ENCODE measurements at regions of chr9 and their contacts with region 1.

Region 1: DNA sequence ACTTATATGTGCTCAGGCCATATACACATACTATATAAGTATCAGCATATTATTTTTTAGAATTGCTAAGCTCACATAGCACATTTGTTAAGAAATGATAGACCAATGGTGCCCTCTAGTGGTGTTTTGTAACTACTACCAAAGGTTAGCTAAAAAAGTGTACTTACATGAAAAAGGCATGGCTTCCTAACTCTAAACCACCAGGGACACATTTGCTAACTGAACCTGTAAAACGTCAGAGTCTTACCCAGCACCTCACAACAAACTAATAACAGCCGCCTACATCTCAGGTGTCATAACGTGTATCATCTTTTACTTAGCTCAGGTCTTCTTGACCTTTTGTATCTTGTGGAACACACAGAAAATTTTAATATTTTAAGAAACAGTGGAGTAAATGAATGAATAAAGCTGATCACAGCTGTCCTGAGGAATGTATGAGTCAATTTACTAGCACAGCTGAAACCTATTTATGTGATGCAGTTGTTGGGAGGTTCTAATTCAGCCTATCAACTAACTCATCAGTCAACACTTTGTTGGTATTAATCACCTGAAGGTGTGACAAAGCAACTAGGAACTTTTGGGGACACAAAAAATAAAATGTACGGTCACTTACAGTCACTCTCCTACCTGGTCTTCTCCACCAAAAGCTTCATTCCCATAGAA is 72.9 kb downstream of the BAAT start:
- H3K4me3 ChIP-seq: no peak overlapping the region
- H3K27ac ChIP-seq: no peak overlapping the region
- H3K4me1 ChIP-seq: no peaks in the 10 kb centered on the region
- CTCF ChIP-seq: 0 out of 2 replicates have a peak, but pooled peaks have one; percentile 22

Region 2: GRCh38 chr9:100700689-100701318 is 611.1 kb before region 1 on chr9:
- CTCF ChIA-PET with region 1: interaction called, 38 read pairs
- POLR2A ChIA-PET with region 1: no interaction called
- H3K4me3 ChIP-seq: no peak overlapping the region
- H3K27ac ChIP-seq: no peak overlapping the region
- H3K4me1 ChIP-seq: no peaks in the 10 kb centered on the region
- CTCF ChIP-seq: no peak

Region 3: GRCh38 chr9:100959226-100959625 is 352.7 kb before region 1 on chr9:
- CTCF ChIA-PET with region 1: no interaction called
- POLR2A ChIA-PET with region 1: no interaction called
- H3K4me3 ChIP-seq: no peak overlapping the region
- H3K27ac ChIP-seq: no peak overlapping the region
- H3K4me1 ChIP-seq: no peaks in the 10 kb centered on the region
- CTCF ChIP-seq: no peak

Region 4: GRCh38 chr9:101026824-101027223 is 285.1 kb before region 1 on chr9:
- CTCF ChIA-PET with region 1: no interaction called
- POLR2A ChIA-PET with region 1: no interaction called
- H3K4me3 ChIP-seq: no peak overlapping the region
- H3K27ac ChIP-seq: no peak overlapping the region
- H3K4me1 ChIP-seq: no peaks in the 10 kb centered on the region
- CTCF ChIP-seq: no peak

Region 5: GRCh38 chr9:101119206-101119819 is 192.6 kb before region 1 on chr9:
- CTCF ChIA-PET with region 1: interaction called, 38 read pairs
- POLR2A ChIA-PET with region 1: no interaction called
- H3K4me3 ChIP-seq: no peak overlapping the region
- H3K27ac ChIP-seq: no peak overlapping the region
- H3K4me1 ChIP-seq: no peaks in the 10 kb centered on the region
- CTCF ChIP-seq: peak; percentile 48; the same call in 1 of the 2 replicates

Region 6: DNA sequence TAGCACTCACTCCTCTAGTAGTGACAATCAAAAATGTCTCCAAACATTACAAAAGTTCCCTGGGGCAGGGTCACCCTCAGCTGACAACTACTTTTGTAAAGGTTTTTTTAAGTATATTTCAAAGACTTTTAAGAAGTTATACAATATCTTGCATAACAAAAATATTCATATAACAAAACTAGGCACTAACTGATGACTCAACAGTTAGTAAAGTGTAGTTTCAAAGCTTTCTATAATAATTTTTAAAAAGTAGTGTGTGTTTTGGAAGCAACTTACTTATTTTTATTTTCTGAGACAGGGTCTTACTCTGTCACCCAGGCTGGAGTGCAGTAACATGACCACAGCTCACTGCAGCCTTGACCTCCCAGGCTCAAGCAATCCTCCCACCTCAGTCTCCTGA is 12.0 kb before region 1 on chr9:
- CTCF ChIA-PET with region 1: interaction called, 10 read pairs
- POLR2A ChIA-PET with region 1: no interaction called
- H3K4me3 ChIP-seq: no peak overlapping the region
- H3K27ac ChIP-seq: no peak overlapping the region
- H3K4me1 ChIP-seq: no peaks in the 10 kb centered on the region
- CTCF ChIP-seq: no peak

Region 7: GRCh38 chr9:101387871-101388506 is 76.1 kb after region 1 on chr9:
- CTCF ChIA-PET with region 1: interaction called, 14 read pairs
- POLR2A ChIA-PET with region 1: no interaction called
- H3K4me3 ChIP-seq: no peak overlapping the region
- H3K27ac ChIP-seq: 0 out of 2 replicates have a peak overlapping the region, but pooled peaks have one; percentile 5
- H3K4me1 ChIP-seq: no peaks in the 10 kb centered on the region
- CTCF ChIP-seq: no peak

Region 8: DNA sequence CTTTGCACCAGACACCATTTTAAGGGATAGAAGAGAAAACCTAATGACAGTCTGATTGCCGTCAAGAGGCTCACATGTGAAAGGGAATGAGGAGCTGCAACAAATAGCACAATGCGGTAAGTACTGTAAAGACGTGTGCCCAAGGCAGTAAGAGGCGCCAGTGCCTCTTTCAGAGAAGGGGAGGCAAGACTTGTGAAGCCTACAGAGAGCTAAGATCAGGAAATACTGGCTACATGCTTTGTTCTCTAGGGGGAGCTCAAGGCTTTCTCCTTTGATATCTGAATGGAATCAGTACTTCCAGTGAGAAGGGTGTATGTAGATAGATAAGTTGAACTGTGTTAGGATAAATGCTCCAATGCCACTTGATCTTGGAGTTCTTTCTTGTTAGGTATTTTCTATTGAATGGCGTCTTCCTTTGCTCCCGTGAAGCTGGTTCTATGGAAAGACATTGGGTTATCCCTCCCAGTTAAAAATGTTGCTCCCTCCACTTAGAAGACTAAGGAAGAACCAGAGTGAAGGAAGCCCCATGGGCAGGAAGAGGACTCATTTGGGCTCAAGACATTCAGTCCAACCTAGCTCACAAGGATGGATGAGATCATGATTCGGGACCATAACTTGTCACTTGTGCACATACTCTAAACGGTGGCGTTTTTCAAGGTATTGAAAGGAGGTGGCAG is 147.2 kb after region 1 on chr9:
- CTCF ChIA-PET with region 1: no interaction called
- POLR2A ChIA-PET with region 1: no interaction called
- H3K4me3 ChIP-seq: no peak overlapping the region
- H3K27ac ChIP-seq: no peak overlapping the region
- H3K4me1 ChIP-seq: no peaks in the 10 kb centered on the region
- CTCF ChIP-seq: peak; percentile 39; the same call in 1 of the 2 replicates

Measured in HEK293 (cell line).